Cardiac septum (tissue), 1 donor: ENCODE measurements at regions of chr13 and their contacts with region 1.

Region 1: GRCh38 chr13:110455941-110456340 is 105.6 kb downstream of the RAB20 start:
- DNase-seq: peak; percentile 85

Region 2: DNA sequence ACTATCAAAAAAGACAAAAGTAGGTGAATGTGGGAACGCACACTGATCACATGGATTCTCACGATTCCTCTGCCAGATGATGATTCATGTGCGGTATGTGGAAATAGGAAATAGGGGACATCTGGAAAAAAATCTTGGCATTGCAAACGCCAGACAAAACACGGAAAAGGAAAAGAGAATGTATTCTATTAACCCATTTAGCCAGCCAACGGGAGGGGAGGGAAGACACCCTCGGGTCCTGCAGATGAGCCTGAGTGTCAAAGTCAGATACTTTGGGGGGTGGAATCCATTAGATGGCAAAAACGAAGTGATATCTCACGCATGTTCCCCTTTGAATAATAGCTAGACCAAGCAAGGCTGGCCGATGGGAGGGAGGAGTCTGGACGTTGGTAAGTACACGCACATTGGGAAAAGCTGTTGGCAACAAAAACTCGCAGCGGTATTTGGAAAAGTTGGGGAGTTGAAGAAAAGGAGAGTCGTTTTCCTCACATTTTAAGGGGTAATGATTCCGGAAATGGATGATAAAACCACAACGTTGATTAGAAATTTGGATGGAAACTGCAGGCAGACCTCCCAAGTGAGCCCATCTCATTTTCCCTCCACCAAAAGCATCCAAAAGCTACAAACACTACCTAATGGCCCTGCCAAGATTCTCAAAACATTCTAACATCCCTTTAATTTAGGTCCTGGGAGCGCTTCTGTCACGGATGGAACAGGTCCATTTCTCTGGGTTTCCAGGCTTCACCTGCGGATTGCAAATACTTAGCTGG is 222.6 kb before region 1 on chr13:
- intact Hi-C with region 1: no loop called
- DNase-seq: no peak

Region 3: DNA sequence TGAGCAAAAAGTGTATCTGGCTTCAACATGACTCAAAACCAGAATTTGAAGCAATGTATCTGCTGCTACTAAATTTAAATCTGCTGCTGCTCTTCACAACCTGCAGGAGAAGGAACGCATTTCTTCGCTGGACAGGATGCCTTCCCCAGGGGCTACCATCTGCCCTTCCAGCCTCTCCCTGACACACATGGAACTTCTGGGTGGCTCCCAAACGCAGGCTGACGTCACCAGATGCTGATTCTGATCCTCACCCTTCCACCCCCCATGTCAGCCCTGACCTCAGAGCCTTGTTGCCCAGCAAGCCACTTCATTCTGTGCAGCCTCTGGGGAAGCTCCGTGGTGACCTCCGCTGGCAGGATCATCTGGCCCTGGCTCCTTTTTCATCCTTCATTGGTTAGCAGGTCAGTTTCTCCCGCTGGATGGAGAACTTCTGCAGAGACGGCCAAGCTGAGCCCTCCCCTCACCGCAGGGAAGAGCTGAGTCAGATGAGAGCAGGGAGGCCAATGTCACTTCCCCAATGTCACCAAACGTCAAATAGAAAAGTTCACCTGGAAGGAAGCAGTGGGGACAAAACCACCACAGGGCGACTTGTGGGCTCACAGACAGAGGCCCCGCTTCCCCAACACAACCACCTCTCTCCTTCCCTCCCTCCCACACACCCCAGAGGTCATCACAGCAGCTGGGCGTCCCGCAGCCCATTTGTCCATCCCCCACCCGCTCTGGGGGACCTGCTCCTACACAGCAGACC is 119.6 kb after region 1 on chr13:
- intact Hi-C with region 1: loop called (anchors 5 kb)
- DNase-seq: peak; percentile 83

Region 4: GRCh38 chr13:110615322-110616102 is 159.6 kb after region 1 on chr13 and contains the start of gene NAXD:
- intact Hi-C with region 1: no loop called
- DNase-seq: peak; percentile 95
- total RNA-seq, gene NAXD: 23.7 TPM